ENCODE measurements at regions of chr21 and their contacts with region 1.

Region 1: DNA sequence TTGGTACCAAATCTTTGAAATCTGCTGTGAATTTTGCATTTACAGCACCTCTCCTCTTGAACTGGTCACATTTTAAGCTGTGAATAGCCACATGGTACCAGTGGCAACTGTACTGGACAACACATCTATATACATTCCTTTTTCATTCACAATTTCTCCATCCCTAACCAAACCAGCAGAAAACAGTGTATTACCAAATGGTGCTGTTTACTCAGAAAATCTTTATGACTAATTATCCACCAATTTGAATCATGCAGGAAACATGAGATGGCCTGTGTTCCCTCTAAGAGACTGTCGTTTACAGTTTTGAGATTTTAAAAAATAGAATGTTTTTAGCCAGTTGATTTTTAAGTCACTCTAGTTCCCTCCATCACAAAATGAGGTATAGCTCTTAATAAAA is 17.6 kb upstream of the CCT8 start:
- DNase-seq: no peak
- ATAC-seq: no peak
- H3K4me3 ChIP-seq: no peak overlapping the region
- H3K27ac ChIP-seq: no peak overlapping the region
- H3K4me1 ChIP-seq: peaks cover 2 to 9% of the 10 kb centered on the region in 2 experiments; a peak in 3 of 4 replicates
- H3K27me3 ChIP-seq: no peaks in the 10 kb centered on the region
- CTCF ChIP-seq: no peak
- POLR2A ChIP-seq: no peak
- RAD21 ChIP-seq: no peak

Region 2: GRCh38 chr21:29125191-29125590 is 34.2 kb after region 1 on chr21:
- CTCF ChIA-PET with region 1: no interaction called
- POLR2A ChIA-PET with region 1: no interaction called
- RAD21 ChIA-PET with region 1: no interaction called
- intact Hi-C with region 1: no loop called
- DNase-seq: no peak
- ATAC-seq: no peak
- H3K4me3 ChIP-seq: no peak overlapping the region
- H3K27ac ChIP-seq: no peak overlapping the region
- H3K4me1 ChIP-seq: no peaks in the 10 kb centered on the region
- H3K27me3 ChIP-seq: no peaks in the 10 kb centered on the region
- CTCF ChIP-seq: no peak
- POLR2A ChIP-seq: no peak
- RAD21 ChIP-seq: no peak

Region 3: GRCh38 chr21:29164325-29164942 is 73.4 kb after region 1 on chr21:
- CTCF ChIA-PET with region 1: interaction called, 3 read pairs
- POLR2A ChIA-PET with region 1: no interaction called
- RAD21 ChIA-PET with region 1: no interaction called
- intact Hi-C with region 1: loop called (anchors 5 kb)
- DNase-seq: peak; percentile 69
- ATAC-seq: peak; percentile 72
- H3K4me3 ChIP-seq: no peak overlapping the region
- H3K27ac ChIP-seq: no peak overlapping the region
- H3K4me1 ChIP-seq: peaks cover 18 to 36% of the 10 kb centered on the region in 2 experiments
- H3K27me3 ChIP-seq: no peaks in the 10 kb centered on the region
- CTCF ChIP-seq: peak; percentile 67 to 84 (median 69)
- POLR2A ChIP-seq: no peak
- RAD21 ChIP-seq: peak; percentile 84

Region 4: GRCh38 chr21:29342363-29342957 is 251.4 kb after region 1 on chr21:
- CTCF ChIA-PET with region 1: no interaction called
- POLR2A ChIA-PET with region 1: no interaction called
- RAD21 ChIA-PET with region 1: no interaction called
- intact Hi-C with region 1: loop called (anchors 10 kb)
- DNase-seq: no peak
- ATAC-seq: no peak
- H3K4me3 ChIP-seq: no peak overlapping the region
- H3K27ac ChIP-seq: no peak overlapping the region
- H3K4me1 ChIP-seq: no peaks in the 10 kb centered on the region
- H3K27me3 ChIP-seq: no peaks in the 10 kb centered on the region
- CTCF ChIP-seq: no peak
- POLR2A ChIP-seq: no peak
- RAD21 ChIP-seq: no peak

Region 5: DNA sequence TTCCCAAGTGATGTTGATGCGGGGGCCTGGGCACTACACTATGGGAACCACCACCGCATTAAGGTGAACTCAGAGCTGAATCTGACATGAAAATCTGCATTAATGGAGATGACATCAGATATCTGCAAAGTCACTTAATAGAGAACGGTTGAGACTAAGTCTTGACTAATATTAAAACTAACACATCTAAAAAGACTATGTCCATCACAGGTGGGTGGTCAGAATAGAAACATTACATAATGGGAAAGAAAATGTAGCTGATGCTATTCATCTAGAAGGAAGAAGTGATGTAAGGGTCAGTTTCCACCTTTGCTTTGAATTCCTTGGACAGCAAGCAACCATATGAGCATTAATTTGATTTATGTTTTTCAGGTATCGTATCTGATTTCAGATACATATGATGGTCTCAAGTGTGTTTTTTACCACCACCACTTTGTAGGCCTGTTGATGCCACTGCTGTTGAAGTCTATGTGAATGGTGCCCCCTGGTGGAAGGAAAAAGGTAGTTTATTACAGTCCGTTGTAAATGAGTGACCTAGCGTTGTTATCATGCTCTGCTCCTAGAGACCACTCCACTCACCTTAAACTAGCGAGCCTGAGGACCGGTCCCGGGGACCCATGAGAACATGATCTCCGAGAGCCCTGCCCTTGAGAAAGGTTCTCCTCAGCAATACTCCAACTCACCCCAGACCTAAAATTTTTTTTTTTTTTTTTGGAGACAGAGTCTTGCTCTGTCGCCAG is 281.2 kb after region 1 on chr21:
- CTCF ChIA-PET with region 1: interaction called, 34 read pairs
- POLR2A ChIA-PET with region 1: no interaction called
- RAD21 ChIA-PET with region 1: interaction called, 4 to 5 read pairs
- intact Hi-C with region 1: loop called (anchors 1 kb)
- DNase-seq: peak; percentile 67
- ATAC-seq: peak; percentile 88
- H3K4me3 ChIP-seq: no peak overlapping the region
- H3K27ac ChIP-seq: no peak overlapping the region
- H3K4me1 ChIP-seq: no peaks in the 10 kb centered on the region
- H3K27me3 ChIP-seq: no peaks in the 10 kb centered on the region
- CTCF ChIP-seq: peak; percentile 59 to 82 (median 61); a peak in 5 of 6 replicates
- POLR2A ChIP-seq: no peak
- RAD21 ChIP-seq: peak; percentile 77

Region 6: DNA sequence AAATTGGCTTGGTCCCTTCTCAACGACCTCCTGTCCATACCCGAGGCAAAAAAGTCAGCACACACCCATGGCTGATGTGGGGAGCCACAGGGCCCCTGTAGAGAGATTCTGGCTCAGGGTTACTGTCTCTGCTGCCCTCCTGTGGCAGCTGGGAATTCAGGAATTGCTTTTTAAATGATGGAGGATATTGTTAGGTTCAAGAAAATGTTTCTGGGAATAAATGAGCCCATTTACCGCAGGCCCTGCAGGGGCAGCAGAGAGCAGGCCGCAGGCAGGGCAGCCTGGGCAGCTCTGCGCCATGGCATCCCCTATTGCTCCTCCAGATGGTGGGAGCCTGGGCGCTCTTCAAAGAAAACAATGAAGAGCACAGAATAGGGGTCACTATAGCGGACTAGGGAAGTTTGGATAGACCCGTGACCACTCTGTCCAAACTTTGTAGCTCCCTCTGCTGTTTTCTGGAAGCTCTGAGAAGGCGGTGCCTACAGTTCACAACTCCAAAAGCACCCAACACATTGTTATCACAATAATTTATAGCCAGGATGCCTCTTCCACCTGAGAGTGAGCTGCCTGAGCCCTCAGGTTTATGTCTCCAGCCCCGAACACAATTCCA is 408.8 kb after region 1 on chr21:
- CTCF ChIA-PET with region 1: interaction called, 3 read pairs
- POLR2A ChIA-PET with region 1: no interaction called
- RAD21 ChIA-PET with region 1: interaction called, 3 to 4 read pairs
- intact Hi-C with region 1: loop called (anchors 2 kb)
- DNase-seq: peak; percentile 32
- ATAC-seq: peak; percentile 99
- H3K4me3 ChIP-seq: no peak overlapping the region
- H3K27ac ChIP-seq: no peak overlapping the region
- H3K4me1 ChIP-seq: no peaks in the 10 kb centered on the region
- H3K27me3 ChIP-seq: no peaks in the 10 kb centered on the region
- CTCF ChIP-seq: peak; percentile 76 to 95 (median 86); a peak in 5 of 6 replicates
- POLR2A ChIP-seq: no peak
- RAD21 ChIP-seq: peak; percentile 55

Region 7: DNA sequence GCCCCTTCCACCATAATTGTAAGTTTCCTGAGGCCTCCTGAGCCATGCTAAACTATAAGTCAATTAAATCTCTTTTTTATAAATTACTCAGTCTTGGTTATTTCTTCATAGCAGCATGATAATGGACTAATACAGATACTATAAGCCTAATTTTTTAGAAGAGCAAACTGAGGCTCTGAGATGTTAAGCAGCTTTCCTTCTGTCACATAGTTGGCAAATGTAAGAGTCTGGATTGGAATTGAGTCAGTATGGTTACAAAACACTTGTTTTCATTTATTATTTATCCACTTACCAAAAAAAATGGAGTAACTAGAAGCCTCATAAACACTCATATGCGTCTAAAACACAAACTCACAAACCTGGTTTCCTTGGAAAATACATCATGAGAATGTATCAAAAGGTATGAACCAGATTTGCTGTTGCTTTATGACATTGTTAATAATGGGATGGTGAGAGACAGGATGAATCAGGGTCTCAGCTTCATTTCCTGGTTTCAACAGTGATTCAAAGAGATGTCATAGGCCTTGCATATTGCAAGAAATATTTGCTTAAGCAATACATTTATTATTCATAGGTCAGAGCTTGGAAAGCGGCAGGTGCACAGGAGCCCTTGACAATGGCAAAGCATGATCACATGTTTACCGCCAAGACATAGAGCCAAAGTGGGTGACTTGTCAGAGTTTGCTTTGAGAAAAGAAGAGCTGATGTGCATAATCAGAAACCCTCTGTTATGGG is 627.2 kb after region 1 on chr21:
- CTCF ChIA-PET with region 1: no interaction called
- POLR2A ChIA-PET with region 1: no interaction called
- RAD21 ChIA-PET with region 1: no interaction called
- intact Hi-C with region 1: no loop called
- DNase-seq: no peak
- ATAC-seq: no peak
- H3K4me3 ChIP-seq: no peak overlapping the region
- H3K27ac ChIP-seq: no peak overlapping the region
- H3K4me1 ChIP-seq: no peaks in the 10 kb centered on the region
- H3K27me3 ChIP-seq: no peaks in the 10 kb centered on the region
- CTCF ChIP-seq: no peak
- POLR2A ChIP-seq: no peak
- RAD21 ChIP-seq: no peak

Region 8: DNA sequence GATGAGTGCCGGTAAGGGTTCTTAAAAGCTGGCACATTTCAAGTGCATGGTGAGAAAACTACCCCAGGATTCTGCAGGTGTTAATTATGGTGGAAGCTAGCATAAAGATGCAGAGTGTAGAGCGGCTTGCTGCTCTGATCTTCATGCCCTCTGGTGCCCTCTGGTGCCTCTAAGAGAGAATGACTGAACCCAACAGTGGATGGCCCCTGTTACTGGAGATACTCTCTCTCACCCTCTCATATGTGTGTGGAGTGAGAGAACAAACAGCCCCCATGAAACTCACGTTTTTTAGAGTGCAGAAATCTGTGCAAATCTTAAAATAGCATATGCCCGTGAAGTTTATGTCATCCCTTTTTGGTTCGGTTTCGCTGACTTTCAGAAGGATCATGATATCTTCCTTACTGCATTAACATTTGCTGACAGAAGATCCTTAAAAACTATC is 758.7 kb after region 1 on chr21:
- CTCF ChIA-PET with region 1: no interaction called
- POLR2A ChIA-PET with region 1: no interaction called
- RAD21 ChIA-PET with region 1: no interaction called
- intact Hi-C with region 1: loop called (anchors 5 kb)
- DNase-seq: no peak
- ATAC-seq: peak; percentile 60; the same call in 1 of the 2 replicates
- H3K4me3 ChIP-seq: no peak overlapping the region
- H3K27ac ChIP-seq: no peak overlapping the region
- H3K4me1 ChIP-seq: no peaks in the 10 kb centered on the region
- H3K27me3 ChIP-seq: no peaks in the 10 kb centered on the region
- CTCF ChIP-seq: peak in 2 of 3 experiments; percentile 54 to 56; a peak in 4 of 6 replicates
- POLR2A ChIP-seq: no peak
- RAD21 ChIP-seq: no peak

Measured in HCT116 (cell line).